Sciatic nerve (tissue), 2 donors: ENCODE measurements at regions of chr10 and their contacts with region 1.

Region 1: DNA sequence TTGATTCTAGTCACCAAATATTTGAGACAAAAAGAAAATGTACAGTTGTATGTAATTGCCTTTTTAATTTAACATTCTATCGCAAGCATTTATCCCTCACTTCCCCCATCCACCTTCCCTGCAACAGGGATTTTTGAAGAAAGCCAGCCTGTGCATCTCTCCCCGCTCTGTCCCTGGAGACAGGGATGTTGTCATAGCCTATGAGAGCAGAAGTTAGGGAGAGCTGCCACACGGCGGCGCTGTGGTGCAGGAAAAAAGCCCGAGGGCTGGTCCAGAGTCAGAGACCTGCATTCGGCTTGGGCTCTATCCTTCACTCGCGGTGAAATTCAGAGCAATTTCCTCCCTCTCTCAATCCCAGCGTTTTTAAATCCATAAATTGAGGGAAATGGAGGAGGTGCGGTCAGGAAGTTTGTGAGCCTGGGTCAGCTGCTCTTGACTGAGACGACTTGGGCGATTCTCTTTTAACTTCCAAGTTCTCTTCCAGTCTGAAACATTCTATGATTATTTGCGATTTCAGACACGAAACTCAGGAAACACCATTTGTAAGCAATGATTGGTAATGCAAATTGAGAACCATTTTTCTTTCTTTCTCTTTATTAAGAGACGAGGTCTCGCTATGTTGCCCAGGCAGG is 17.5 kb downstream of the HKDC1 start:
- DNase-seq: peak; percentile 94
- ATAC-seq: peak; percentile 97

Region 2: DNA sequence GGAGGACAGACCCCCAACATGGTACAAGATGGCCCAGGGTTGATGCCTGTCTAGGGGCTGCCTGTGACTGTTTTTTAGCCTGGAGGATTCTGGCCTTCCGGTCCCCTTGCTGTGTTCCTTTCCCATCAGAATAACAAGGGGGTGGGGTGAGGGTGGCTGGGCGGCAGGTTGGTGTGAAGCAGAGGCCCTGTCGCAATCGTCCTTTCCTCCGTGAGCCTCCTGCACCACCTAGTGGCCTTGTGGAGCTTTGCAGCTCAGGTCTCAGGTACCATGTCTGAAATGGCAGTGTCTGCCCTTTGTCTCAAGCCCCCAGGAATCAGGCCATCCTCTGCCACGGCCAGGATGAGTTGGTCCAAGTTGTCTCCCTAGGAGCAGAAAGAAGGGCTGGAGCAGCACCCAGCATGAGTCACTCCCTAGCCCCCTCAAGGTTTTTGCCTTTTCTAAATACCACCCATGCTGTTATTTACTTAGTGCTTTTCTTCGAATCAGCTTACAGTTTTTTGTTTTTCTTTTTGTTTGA is 154.9 kb after region 1 on chr10:
- intact Hi-C with region 1: loop called (anchors 2 kb)
- DNase-seq: peak; percentile 90
- ATAC-seq: peak; percentile 93

Region 3: DNA sequence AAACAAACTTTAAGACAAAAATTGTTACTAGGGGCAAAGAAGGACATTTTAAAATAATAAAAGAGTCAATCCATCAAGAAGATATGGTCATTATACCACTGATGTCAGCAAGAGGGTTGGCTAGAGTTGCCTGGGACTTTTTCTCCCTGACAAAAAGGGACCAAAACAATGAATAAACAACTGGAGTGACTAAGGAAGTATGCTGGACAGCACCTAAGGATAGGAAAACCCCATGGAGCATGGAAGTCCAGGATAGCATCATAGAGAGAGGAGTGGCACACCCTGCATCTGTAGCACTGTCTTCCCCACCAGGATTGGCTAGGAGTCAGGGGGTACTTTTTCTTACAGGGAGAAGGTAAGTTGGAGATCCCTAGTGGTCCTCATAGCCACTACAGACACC is 741.5 kb after region 1 on chr10:
- intact Hi-C with region 1: no loop called
- DNase-seq: no peak
- ATAC-seq: no peak